Right lobe of liver (tissue), 6 donors: ENCODE measurements at regions of chr12 and their contacts with region 1.

Region 1: GRCh38 chr12:54360717-54361456 is 3.4 kb downstream of the GPR84 start:
- DNase-seq: peak; percentile 79 to 86 (median 81)
- ATAC-seq: peak; percentile 42 to 57 (median 50)
- H3K4me3 ChIP-seq: no peak overlapping the region
- H3K27ac ChIP-seq: no peak overlapping the region
- H3K4me1 ChIP-seq: peaks cover 0 to 7% (median 0%) of the 10 kb centered on the region in 4 donors
- H3K27me3 ChIP-seq: no peaks in the 10 kb centered on the region
- CTCF ChIP-seq: peak; percentile 79 to 86 (median 82)
- POLR2A ChIP-seq: no peak

Region 2: GRCh38 chr12:54294152-54294952 is 66.5 kb before region 1 on chr12:
- intact Hi-C with region 1: loop called (anchors 5 to 10 kb)
- DNase-seq: peak; percentile 73 to 77 (median 74)
- ATAC-seq: peak; percentile 89 to 95 (median 92)
- H3K4me3 ChIP-seq: no peak overlapping the region
- H3K27ac ChIP-seq: no peak overlapping the region
- H3K4me1 ChIP-seq: no peaks in the 10 kb centered on the region
- H3K27me3 ChIP-seq: no peaks in the 10 kb centered on the region
- CTCF ChIP-seq: peak; percentile 64 to 80 (median 78)
- POLR2A ChIP-seq: no peak